Right ventricle myocardium inferior (tissue), 1 donor: ENCODE measurements at regions of chr11 and their contacts with region 1.

Region 1: DNA sequence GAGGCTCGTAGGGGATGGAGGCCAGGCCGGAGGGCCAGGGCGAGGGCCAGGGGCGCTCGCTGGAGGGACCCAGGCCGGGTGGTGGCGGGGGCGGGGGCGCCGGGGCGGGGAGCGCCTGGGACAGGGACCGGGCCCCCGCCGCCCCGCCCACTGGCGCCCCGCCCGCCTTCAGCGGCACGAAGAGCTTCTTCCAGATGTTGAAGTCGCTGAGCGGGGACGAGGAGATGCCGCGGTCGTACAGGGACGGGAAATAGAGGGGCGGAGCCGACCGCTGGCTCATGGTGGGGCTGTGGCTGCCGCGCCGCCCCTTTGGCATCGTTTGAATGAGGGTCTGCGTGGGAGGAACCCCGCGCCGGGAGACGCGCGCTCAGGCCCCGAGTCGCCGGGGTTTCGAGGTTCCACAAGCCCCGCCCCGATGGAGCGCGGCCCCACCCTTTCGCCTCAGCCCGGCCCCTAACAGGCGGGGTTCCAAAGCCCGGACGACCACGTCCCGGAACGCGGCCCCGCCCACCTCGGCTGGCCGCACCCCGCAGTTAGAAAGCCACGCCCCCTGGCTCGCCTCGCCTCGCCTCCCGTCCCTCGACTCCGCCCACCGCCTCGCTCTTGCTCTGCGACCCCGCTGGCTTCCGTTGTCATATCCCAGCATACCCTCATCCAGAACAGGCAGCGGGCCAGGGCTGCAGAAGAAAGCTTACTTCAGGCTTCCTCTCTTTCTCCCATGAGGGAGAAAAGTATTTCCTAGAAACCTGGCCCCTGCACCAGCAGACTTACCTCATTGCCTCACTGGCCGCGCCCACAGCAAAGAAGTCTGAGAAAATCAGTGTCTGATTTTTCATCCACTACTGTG is at the start of gene C11orf91:
- DNase-seq: peak; percentile 98
- ATAC-seq: peak; percentile 92
- total RNA-seq, gene C11orf91: not detected

Region 2: GRCh38 chr11:33735428-33736147 is 34.9 kb after region 1 on chr11:
- intact Hi-C with region 1: loop called (anchors 2 kb)
- DNase-seq: peak; percentile 81
- ATAC-seq: peak; percentile 21

Region 3: GRCh38 chr11:33829433-33830141 is 128.9 kb after region 1 on chr11:
- intact Hi-C with region 1: loop called (anchors 5 kb)
- DNase-seq: no peak
- ATAC-seq: peak; percentile 79

Region 4: DNA sequence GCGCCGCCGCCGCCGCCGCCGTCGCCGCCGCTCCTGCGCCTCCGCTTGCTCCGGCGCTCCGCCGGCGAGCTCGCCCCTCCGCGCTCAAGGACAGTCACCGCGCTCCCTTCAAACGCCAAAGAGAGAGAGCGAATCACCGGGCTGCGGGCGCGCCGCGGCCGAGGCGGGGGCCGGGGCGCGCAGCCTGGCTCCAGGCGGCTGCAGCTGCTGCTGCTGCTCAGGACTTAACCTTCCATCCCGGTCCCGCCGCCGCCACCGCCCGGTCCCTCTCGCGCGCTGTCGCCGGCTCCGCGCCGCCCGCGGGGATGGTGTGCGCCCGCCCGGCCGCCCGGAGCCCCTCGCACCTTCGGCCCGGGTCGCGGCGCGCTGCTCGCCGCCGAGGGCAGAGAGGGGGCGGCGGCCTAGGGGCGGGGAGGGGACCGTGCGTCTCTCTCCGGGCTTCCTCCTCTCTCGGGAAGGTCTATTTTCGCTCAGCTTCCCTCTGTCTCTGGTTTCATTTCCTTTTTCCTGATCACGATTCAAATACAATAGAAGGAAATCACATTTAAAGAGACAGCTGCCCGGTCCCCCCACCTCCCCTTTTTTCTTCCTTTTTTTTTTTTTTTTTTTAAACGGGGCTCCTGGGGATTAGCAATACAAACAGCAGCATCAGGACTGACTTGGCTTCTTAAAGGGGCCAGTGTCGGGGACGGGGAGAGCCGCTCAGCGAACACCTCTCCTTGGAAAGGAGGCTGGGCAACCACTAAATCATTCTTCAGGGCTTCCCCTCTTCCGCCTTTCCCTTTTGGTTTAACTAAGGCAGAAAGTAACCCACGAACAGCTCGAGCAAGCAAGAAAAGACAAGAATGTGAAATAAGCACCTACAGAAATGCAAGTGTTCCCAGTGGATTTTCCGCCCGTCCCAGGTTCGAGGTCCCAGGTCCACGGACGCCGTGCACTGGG is 169.1 kb after region 1 on chr11:
- intact Hi-C with region 1: no loop called
- DNase-seq: peak; percentile 81
- ATAC-seq: peak; percentile 74